Tibial artery (tissue), 4 donors: ENCODE measurements at regions of chr6 and their contacts with region 1.

Region 1: DNA sequence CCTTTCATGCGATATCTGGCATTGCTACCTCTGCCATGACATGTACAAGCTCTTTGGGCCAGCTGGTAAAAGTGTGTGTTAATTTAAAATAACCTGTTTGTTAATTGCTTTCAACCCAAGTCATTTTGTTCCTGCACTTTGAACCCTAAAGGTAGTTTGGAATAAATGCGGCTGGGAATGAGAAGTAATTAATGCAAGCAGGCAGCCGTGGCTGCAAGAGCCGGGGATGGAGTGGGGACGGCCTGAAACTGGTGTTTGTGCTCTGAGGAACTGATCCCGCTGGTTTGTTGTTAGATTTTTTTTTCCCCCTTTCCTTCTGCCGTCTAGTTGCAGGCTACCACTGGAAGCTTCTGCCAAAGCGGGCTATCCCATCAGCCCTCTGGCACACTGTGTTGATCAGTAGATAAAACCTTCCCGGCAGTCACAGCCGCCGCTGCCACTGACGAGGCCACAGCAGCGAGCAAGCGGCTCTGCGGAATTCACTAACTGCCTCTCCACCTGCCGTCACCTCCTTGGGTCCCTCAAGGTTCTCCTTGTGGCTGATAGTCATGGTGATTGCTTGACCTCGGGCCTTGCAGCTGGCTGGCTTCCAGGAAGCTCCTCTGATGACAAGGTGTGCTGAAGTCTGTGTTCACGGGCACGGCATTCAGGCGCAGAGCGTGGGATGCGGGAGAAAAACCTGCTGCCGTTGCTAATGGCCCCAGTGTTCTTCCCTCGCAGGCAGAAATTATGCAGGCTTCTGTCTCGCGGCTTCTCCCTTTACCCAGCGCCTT is 315.9 kb downstream of the TFAP2A start:
- DNase-seq: no peak
- H3K4me3 ChIP-seq: no peak overlapping the region
- H3K27ac ChIP-seq: no peak overlapping the region
- H3K4me1 ChIP-seq: no peaks in the 10 kb centered on the region
- H3K27me3 ChIP-seq: no peaks in the 10 kb centered on the region
- CTCF ChIP-seq: no peak

Region 2: DNA sequence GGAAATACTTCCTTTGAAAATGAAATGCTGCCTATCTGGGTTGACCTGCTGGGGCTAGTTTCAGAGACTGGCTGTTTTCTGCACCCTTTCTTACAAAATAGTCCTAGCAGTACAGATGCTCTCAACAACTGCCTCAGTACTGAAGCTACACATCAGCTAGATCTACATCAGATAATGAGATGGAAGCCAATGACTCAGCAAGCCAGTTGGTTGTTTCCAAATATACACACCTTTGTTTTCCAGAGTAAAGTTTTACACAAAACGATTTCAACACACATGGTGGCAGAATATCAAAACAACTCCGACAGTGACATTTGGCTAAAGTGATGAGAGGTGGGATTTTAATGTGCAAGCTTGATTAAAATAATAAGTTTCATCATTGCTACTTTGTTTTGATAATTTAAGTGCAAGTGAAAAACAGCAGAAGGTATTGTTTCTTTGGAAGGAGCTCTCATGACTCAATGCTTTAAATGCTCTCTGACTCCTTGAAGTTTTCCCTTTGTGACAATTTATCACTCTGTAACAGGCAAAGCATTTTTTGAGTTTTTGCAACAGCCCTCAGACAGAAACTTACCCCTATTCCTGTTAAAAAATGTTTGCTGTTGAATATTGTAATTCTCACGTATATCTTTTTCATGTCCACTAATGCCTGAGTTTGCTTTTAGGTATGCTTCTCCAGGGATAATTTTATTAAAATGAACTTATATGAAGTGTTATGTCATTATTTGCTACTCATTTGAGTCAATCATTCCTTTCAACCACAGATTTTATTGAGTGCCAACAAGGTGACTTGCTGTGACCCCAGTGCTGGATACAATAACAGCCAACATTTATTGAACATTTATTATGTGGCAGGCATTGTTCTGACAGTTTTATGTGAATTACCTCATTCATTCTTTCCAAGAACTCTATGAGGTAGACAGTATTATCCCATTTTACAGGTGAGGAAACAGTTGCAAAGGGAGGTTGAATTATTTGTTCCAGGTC is 566.1 kb before region 1 on chr6:
- intact Hi-C with region 1: loop called (anchors 10 kb)
- DNase-seq: no peak
- H3K4me3 ChIP-seq: no peak overlapping the region
- H3K27ac ChIP-seq: no peak overlapping the region
- H3K4me1 ChIP-seq: no peaks in the 10 kb centered on the region
- H3K27me3 ChIP-seq: no peaks in the 10 kb centered on the region
- CTCF ChIP-seq: no peak